BJ (cell line): ENCODE measurements at regions of chr22 and their contacts with region 1.

Region 1: GRCh38 chr22:46845296-46846149 is 83.1 kb downstream of the TBC1D22A start:
- DNase-seq: no peak
- H3K4me3 ChIP-seq: no peak overlapping the region
- H3K27me3 ChIP-seq: no peaks in the 10 kb centered on the region
- CTCF ChIP-seq: peak; percentile 41; the same call in 1 of the 2 replicates

Region 2: GRCh38 chr22:46833228-46833627 is 12.3 kb before region 1 on chr22:
- CTCF ChIA-PET with region 1: interaction called, 18 read pairs
- POLR2A ChIA-PET with region 1: no interaction called
- DNase-seq: no peak
- H3K4me3 ChIP-seq: no peak overlapping the region
- H3K27me3 ChIP-seq: no peaks in the 10 kb centered on the region
- CTCF ChIP-seq: peak; percentile 22; the same call in 1 of the 2 replicates